ENCODE measurements at regions of chr3 and their contacts with region 1.

Region 1: GRCh38 chr3:126245811-126246727 is 65.7 kb upstream of the ALDH1L1 start:
- DNase-seq: peak; percentile 48 to 56
- ATAC-seq: peak; percentile 55 to 92 (median 86)
- H3K4me3 ChIP-seq: no peak overlapping the region
- H3K27ac ChIP-seq: no peak overlapping the region
- H3K4me1 ChIP-seq: peaks cover 0 to 5% (median 0%) of the 10 kb centered on the region in 9 donors
- H3K27me3 ChIP-seq: peaks cover 0 to 3% (median 0%) of the 10 kb centered on the region in 7 donors
- CTCF ChIP-seq: peak; percentile 26 to 68 (median 56)

Region 2: GRCh38 chr3:126287536-126288241 is 41.6 kb after region 1 on chr3:
- intact Hi-C with region 1: no loop called
- DNase-seq: peak; percentile 62 to 71
- ATAC-seq: peak; percentile 82 to 96 (median 93)
- H3K4me3 ChIP-seq: peak overlapping the region; percentile 14 to 57 (median 49)
- H3K27ac ChIP-seq: peak overlapping the region; percentile 63 to 88 (median 80)
- H3K4me1 ChIP-seq: peaks cover 0 to 30% (median 17%) of the 10 kb centered on the region in 9 donors
- H3K27me3 ChIP-seq: peaks cover 0 to 46% (median 3%) of the 10 kb centered on the region in 7 donors
- CTCF ChIP-seq: no peak

Region 3: DNA sequence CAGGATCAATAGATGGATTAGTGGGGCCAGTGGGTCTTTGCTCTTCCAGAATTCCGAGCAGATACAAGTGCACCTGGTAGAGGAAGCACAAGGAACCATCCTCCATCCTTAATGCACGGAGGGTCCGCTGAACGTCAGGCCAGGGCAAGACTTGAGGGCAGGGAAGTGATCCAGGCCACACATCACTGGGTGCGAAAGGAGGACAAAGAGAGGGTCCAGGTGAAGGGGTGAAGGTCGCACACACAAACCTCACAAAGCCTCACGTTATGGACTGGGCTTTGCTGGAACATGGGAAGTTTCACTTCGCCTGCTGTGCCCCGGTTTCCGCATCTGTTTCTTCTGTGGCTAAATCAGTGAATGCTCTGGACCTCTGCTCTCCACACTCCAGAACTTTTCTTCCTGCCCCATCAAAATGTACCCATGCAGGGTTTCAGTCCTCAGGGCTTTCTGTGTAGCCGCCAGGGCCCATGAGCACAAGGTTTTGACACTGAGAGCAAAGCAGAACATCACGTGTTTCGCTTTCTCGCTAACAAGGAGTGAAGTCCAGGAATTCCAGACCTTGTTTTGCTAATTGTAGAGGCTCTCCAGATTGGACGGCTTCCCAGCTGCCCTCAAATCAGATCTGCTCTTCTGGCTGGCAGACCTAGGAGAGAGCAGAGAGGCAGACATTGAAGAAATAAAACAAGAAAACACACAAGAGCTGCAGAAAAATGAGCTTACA is 54.9 kb after region 1 on chr3:
- intact Hi-C with region 1: no loop called
- DNase-seq: peak; percentile 40 to 62
- ATAC-seq: peak; percentile 61 to 98 (median 94)
- H3K4me3 ChIP-seq: no peak overlapping the region
- H3K27ac ChIP-seq: peak overlapping the region in 9 of 10 donors; percentile 56 to 76 (median 72)
- H3K4me1 ChIP-seq: peaks cover 0 to 12% (median 0%) of the 10 kb centered on the region in 9 donors
- H3K27me3 ChIP-seq: no peaks in the 10 kb centered on the region
- CTCF ChIP-seq: no peak

Region 4: GRCh38 chr3:126389112-126389793 is 143.2 kb after region 1 on chr3:
- intact Hi-C with region 1: loop called in 4 of 10 experiments (anchors 1 to 5 kb)
- DNase-seq: peak; percentile 85 to 90
- ATAC-seq: peak; percentile 94 to 98 (median 96)
- H3K4me3 ChIP-seq: peak overlapping the region; percentile 11 to 64 (median 49)
- H3K27ac ChIP-seq: peak overlapping the region; percentile 28 to 87 (median 79)
- H3K4me1 ChIP-seq: peaks cover 0 to 11% (median 5%) of the 10 kb centered on the region in 9 donors
- H3K27me3 ChIP-seq: peaks cover 0 to 23% (median 4%) of the 10 kb centered on the region in 7 donors
- CTCF ChIP-seq: peak; percentile 89 to 100 (median 97)

Region 5: DNA sequence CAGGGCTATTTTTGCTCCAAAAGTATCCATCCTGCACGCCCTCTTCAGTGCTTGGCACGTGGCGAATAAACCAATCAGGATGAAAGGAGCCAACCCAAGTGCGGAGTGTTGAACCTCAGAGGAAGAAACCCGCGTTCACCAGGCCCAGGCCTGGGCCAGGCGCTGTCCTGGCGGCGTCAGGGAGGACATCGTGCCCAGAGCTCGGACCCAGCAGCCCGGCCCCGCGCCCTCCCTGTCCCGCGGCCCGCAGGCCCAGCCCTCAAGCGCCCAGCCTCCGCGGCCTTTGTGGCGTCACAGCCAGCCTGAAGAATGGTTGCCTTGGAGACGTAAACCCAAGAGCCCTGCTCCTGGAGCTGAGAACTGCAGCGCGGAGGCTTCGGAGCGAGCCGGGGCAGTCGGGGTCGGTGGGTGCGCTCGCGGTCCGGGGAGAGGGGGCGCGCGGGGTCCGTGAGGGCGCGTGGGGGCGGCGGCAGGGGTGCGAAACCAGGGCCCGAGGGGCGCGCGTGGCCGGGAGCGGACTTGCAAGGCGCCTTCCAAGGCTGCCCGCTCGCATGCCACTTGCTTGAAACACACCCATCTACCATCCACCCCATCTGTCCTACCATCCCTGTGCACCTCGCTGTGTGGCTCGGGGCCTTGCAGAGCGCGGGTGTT is 148.6 kb after region 1 on chr3 and contains the start of gene CFAP100:
- intact Hi-C with region 1: loop called in 4 of 10 experiments (anchors 1 to 5 kb)
- DNase-seq: peak; percentile 25 to 41
- ATAC-seq: peak; percentile 4 to 81 (median 62)
- H3K4me3 ChIP-seq: peak within 1 kb of the TSS in 9 of 10 donors; percentile 14 to 43 (median 34)
- H3K27ac ChIP-seq: no peak within 1 kb of the TSS
- H3K4me1 ChIP-seq: peaks cover 0 to 9% (median 3%) of the 10 kb centered on the region in 9 donors
- H3K27me3 ChIP-seq: peaks cover 0 to 42% (median 14%) of the 10 kb centered on the region in 7 donors
- CTCF ChIP-seq: no peak
- total RNA-seq, gene CFAP100: not detected

Region 6: DNA sequence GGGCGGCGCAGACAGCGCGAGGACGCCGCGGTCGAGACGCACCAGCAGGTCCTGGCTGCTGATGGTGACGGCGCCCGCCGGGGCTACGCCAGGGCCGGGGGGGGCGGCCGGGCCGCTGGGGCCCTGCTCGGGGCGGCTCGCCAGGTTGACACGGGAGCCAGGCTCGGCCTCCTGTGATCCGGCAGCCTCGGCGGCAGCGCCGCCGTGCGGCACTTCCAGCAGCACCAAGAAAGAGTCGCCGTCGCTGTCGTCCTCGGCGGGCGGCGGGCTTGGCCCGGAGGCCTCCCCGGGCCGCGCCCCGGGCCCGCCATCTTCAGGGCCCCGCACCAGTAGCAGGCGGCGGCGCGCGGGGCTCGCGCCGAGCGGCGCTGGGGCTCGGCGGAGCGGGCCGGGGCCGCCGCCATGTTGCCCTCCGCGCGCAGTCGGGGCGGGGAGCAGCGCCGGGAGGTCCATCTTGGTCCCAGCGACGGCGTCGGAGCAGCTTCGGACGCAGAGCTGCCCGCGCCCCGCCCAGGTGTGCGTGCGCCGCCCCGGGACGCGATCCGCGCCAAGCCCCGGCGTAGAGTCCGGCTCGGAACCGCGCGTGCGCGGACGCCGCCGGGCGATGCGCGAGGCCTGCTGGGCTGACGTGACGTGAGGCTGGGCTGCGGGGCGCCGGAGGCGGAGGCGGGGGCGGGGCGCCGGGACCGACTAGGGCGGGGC is 229.5 kb after region 1 on chr3 and contains the start of gene ZXDC:
- intact Hi-C with region 1: loop called in 3 of 10 experiments (anchors 10 kb)
- DNase-seq: peak; percentile 92 to 97
- ATAC-seq: peak; percentile 86 to 96 (median 93)
- H3K4me3 ChIP-seq: peak within 1 kb of the TSS; percentile 62 to 95 (median 80)
- H3K27ac ChIP-seq: peak within 1 kb of the TSS; percentile 83 to 99 (median 92)
- H3K4me1 ChIP-seq: peaks cover 28 to 51% (median 43%) of the 10 kb centered on the region in 9 donors
- H3K27me3 ChIP-seq: no peaks in the 10 kb centered on the region
- CTCF ChIP-seq: peak in 7 of 9 donors; percentile 26 to 74 (median 52)
- total RNA-seq, gene ZXDC: 15.2 to 25.4 (median 19.7) TPM

Measured in heart right ventricle (tissue), 16 donors.